PC-9 (cell line): ENCODE measurements at regions of chr9 and their contacts with region 1.

Region 1: DNA sequence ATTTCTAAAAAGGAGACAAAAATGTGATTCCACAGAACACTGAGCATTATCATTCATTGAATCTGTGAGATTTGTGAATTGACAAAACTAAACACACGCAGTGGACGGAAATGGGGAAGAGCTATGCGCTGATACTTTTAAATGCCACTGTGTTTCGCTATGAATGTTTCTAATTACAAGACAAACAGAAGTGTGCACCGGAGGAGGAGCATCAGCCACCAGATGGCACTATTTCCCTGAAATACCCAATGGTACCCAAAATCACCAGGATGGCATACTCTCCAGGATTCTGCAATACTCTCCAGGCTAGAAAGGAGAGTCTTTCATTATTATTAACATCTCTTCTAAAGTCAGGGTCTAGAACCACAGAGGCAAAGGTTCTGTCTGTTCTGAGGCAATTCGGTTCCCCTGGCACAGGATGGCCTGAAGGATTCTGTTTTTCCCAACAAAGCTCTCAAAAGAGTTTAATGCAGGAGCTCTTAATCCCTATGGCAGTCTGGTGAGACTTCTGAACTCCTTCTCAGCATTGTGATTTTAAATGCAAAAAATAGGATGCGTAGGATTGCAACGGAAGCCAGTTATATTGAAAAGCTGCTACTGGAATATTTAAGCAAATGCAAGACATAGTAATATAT is 13.8 kb upstream of the PUM3 start:
- DNase-seq: peak; percentile 36 to 46
- H3K4me3 ChIP-seq: no peak overlapping the region
- H3K27ac ChIP-seq: no peak overlapping the region
- H3K4me1 ChIP-seq: no peaks in the 10 kb centered on the region
- H3K27me3 ChIP-seq: no peaks in the 10 kb centered on the region
- CTCF ChIP-seq: peak; percentile 76

Region 2: GRCh38 chr9:2638871-2639673 is 218.6 kb before region 1 on chr9:
- CTCF ChIA-PET with region 1: no interaction called
- POLR2A ChIA-PET with region 1: no interaction called
- intact Hi-C with region 1: no loop called
- DNase-seq: no peak
- H3K4me3 ChIP-seq: no peak overlapping the region
- H3K27ac ChIP-seq: no peak overlapping the region
- H3K4me1 ChIP-seq: no peaks in the 10 kb centered on the region
- H3K27me3 ChIP-seq: no peaks in the 10 kb centered on the region
- CTCF ChIP-seq: no peak

Region 3: DNA sequence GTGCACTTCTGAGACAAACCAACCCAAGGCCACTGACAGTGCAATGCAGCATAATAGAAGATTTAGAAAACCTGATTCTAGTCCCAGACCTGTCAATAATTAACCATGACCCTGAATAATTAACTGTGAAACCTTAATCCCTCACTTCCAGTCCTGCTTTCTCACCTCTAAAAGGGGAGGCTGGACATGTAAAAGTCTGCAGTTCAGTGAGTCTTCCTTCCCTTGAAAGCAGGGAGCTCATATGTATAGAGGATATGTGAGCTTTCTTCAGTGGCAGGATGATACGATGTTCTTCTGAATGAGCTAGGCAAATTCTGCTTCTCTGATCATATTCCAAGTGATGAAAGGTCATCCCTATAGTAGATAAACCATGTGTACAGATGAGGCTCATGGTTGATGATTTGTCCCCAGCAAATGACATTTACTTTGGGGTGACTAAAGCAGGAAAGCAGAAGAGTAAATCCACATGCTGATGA is 137.5 kb before region 1 on chr9:
- CTCF ChIA-PET with region 1: no interaction called
- POLR2A ChIA-PET with region 1: no interaction called
- intact Hi-C with region 1: no loop called
- DNase-seq: no peak
- H3K4me3 ChIP-seq: no peak overlapping the region
- H3K27ac ChIP-seq: no peak overlapping the region
- H3K4me1 ChIP-seq: no peaks in the 10 kb centered on the region
- H3K27me3 ChIP-seq: no peaks in the 10 kb centered on the region
- CTCF ChIP-seq: no peak

Region 4: GRCh38 chr9:2761424-2761823 is 96.3 kb before region 1 on chr9:
- CTCF ChIA-PET with region 1: no interaction called
- POLR2A ChIA-PET with region 1: no interaction called
- intact Hi-C with region 1: no loop called
- DNase-seq: no peak
- H3K4me3 ChIP-seq: no peak overlapping the region
- H3K27ac ChIP-seq: no peak overlapping the region
- H3K4me1 ChIP-seq: peaks cover 7% of the 10 kb centered on the region; the same call in 1 of the 2 replicates
- H3K27me3 ChIP-seq: no peaks in the 10 kb centered on the region
- CTCF ChIP-seq: no peak

Region 5: GRCh38 chr9:3525836-3526164 is 668.1 kb after region 1 on chr9 and contains the start of gene RFX3:
- CTCF ChIA-PET with region 1: no interaction called
- POLR2A ChIA-PET with region 1: no interaction called
- intact Hi-C with region 1: loop called (anchors 10 kb)
- DNase-seq: peak; percentile 70 to 83
- H3K4me3 ChIP-seq: peak within 1 kb of the TSS; percentile 87
- H3K27ac ChIP-seq: peak within 1 kb of the TSS; percentile 100
- H3K4me1 ChIP-seq: peaks cover 16% of the 10 kb centered on the region
- H3K27me3 ChIP-seq: no peaks in the 10 kb centered on the region
- CTCF ChIP-seq: no peak
- total RNA-seq, gene RFX3: 4.6 and 8.4 TPM in 2 replicates

Region 6: GRCh38 chr9:4375424-4376200 is 1517.9 kb after region 1 on chr9:
- CTCF ChIA-PET with region 1: no interaction called
- POLR2A ChIA-PET with region 1: no interaction called
- intact Hi-C with region 1: loop called (anchors 1 kb)
- DNase-seq: no peak
- H3K4me3 ChIP-seq: no peak overlapping the region
- H3K27ac ChIP-seq: no peak overlapping the region
- H3K4me1 ChIP-seq: no peaks in the 10 kb centered on the region
- H3K27me3 ChIP-seq: no peaks in the 10 kb centered on the region
- CTCF ChIP-seq: peak; percentile 51